CD4-positive, alpha-beta memory T cell (primary cell): ENCODE measurements at regions of chr1 and their contacts with region 1.

Region 1: DNA sequence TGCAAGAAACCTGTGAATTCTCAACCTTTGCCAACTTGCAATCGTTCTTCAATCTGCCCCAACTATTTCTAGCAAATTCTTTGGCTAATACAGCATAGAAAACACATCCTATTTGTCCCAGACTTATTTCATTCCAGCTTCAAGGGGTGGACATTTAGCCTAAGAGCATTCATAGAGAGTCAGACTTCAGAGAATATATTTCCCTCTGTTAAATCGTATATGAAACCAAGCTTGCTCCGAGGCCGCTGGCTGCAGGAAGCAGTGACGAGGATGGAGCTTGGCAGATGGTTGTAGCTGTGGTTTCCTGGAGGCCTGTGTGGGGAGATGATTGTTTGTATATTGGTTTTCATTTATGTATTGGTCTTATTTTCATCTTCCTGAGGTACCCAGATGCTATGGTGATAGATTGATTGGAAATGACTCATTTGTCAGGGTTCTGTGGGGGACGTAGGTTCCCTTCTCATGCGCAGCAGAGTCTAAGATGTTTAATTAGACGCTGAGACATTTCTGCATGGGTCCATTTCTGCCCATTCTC is 26.1 kb downstream of the MAN1C1 start:
- DNase-seq: peak; percentile 84 to 89 (median 86)
- H3K4me3 ChIP-seq: peak overlapping the region in 1 of 2 donors; percentile 16
- H3K4me3 Mint-ChIP-seq: peak overlapping the region; percentile 71 to 92 (median 81)
- H3K27ac ChIP-seq: peak overlapping the region; percentile 54
- H3K27ac Mint-ChIP-seq: peak overlapping the region; percentile 87 to 99 (median 94)
- H3K4me1 ChIP-seq: peaks cover 67% of the 10 kb centered on the region
- H3K4me1 Mint-ChIP-seq: peaks cover 50 to 81% (median 64%) of the 10 kb centered on the region in 4 donors
- H3K27me3 ChIP-seq: no peaks in the 10 kb centered on the region
- H3K27me3 Mint-ChIP-seq: no peaks in the 10 kb centered on the region

Region 2: DNA sequence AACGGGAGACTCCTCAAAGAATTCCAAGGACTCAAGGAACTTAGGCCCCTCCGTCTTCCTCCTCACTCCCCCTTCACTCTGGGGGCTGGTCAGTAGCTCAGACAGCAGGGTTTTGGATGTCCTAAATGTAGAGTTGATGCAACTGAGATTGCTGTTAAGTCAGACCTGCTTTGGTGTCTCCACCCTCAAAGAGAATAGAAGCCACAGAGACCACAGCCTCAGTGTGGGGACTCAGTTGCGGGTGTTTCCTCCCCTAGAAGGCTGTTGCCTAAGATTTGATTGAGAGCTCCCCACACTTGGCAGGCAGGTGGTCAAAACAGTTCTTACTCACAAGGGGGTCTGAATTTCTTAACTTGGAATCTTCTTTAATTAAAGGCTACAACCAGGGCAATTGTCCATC is 18.5 kb before region 1 on chr1:
- CTCF ChIA-PET with region 1: interaction called, 63 read pairs
- POLR2A ChIA-PET with region 1: interaction called, 151 read pairs
- intact Hi-C with region 1: loop called (anchors 1 kb)
- DNase-seq: peak in 3 of 5 donors; percentile 19 to 44 (median 33)
- H3K4me3 ChIP-seq: no peak overlapping the region
- H3K4me3 Mint-ChIP-seq: peak overlapping the region in 6 of 8 donors; percentile 45 to 99 (median 54)
- H3K27ac ChIP-seq: no peak overlapping the region
- H3K27ac Mint-ChIP-seq: peak overlapping the region in 4 of 7 donors; percentile 33 to 93 (median 74)
- H3K4me1 ChIP-seq: peaks cover 72% of the 10 kb centered on the region
- H3K4me1 Mint-ChIP-seq: peaks cover 71 to 92% (median 81%) of the 10 kb centered on the region in 4 donors
- H3K27me3 ChIP-seq: no peaks in the 10 kb centered on the region
- H3K27me3 Mint-ChIP-seq: no peaks in the 10 kb centered on the region

Region 3: DNA sequence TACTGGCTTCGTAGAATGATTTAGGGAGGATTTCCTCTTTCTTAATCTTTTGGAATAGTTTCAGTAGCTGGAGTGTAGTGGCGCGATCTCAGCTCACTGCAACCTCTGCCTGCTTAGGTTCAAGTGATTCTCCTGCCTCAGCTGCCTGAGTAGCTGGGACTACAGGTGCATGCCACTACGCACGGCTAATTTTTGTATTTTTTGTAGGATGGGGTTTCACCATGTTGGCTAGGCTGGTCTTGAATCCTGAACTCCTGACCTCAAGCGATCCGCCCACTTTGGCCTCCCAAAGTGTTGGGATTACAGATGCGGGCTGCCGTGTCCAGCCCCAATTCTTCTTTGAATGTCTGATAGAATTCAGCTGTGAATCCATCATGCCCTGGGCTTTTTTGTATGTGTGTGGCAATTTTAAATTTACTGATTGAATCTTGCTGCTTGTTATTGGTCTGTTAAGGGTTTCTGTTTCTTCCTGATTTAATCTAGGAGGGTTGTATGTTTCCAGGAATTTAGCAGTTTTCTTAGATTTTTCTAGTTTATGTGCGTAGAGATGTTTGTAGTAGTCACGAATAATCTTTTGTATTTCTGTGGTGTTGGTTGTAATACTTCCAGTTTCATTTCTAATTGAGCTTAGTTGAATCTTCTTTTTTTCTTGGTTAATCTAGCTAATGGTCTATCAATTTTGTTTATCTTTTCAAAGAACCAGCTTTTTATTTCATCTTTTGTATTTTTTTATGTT is 10.7 kb before region 1 on chr1:
- CTCF ChIA-PET with region 1: interaction called, 13 read pairs
- POLR2A ChIA-PET with region 1: interaction called, 29 read pairs
- intact Hi-C with region 1: no loop called
- DNase-seq: peak in 2 of 5 donors; percentile 29 to 33
- H3K4me3 ChIP-seq: peak overlapping the region in 1 of 2 donors; percentile 33
- H3K4me3 Mint-ChIP-seq: peak overlapping the region; percentile 73 to 93 (median 84)
- H3K27ac ChIP-seq: peak overlapping the region; percentile 57
- H3K27ac Mint-ChIP-seq: peak overlapping the region; percentile 59 to 98 (median 95)
- H3K4me1 ChIP-seq: peaks cover 64% of the 10 kb centered on the region
- H3K4me1 Mint-ChIP-seq: peaks cover 49 to 74% (median 60%) of the 10 kb centered on the region in 4 donors
- H3K27me3 ChIP-seq: no peaks in the 10 kb centered on the region
- H3K27me3 Mint-ChIP-seq: no peaks in the 10 kb centered on the region

Region 4: GRCh38 chr1:25675729-25676476 is 33.3 kb after region 1 on chr1:
- CTCF ChIA-PET with region 1: interaction called, 6 read pairs
- POLR2A ChIA-PET with region 1: interaction called, 33 read pairs
- intact Hi-C with region 1: loop called (anchors 2 kb)
- DNase-seq: peak; percentile 74 to 83 (median 78)
- H3K4me3 ChIP-seq: peak overlapping the region in 1 of 2 donors; percentile 18
- H3K4me3 Mint-ChIP-seq: peak overlapping the region; percentile 74 to 89 (median 85)
- H3K27ac ChIP-seq: no peak overlapping the region
- H3K27ac Mint-ChIP-seq: peak overlapping the region; percentile 85 to 95 (median 92)
- H3K4me1 ChIP-seq: peaks cover 71% of the 10 kb centered on the region
- H3K4me1 Mint-ChIP-seq: peaks cover 66 to 88% (median 77%) of the 10 kb centered on the region in 4 donors
- H3K27me3 ChIP-seq: no peaks in the 10 kb centered on the region
- H3K27me3 Mint-ChIP-seq: no peaks in the 10 kb centered on the region